A673 (cell line): ENCODE measurements at regions of chr15 and their contacts with region 1.

Region 1: GRCh38 chr15:29233566-29233965 is 36.1 kb downstream of the NSMCE3 start:
- DNase-seq: no peak
- H3K4me3 ChIP-seq: no peak overlapping the region
- H3K27ac ChIP-seq: no peak overlapping the region
- H3K4me1 ChIP-seq: no peaks in the 10 kb centered on the region
- H3K27me3 ChIP-seq: peaks cover 22% of the 10 kb centered on the region
- CTCF ChIP-seq: no peak

Region 2: GRCh38 chr15:28783466-28783865 is 450.1 kb before region 1 on chr15:
- CTCF ChIA-PET with region 1: no interaction called
- POLR2A ChIA-PET with region 1: no interaction called
- intact Hi-C with region 1: no loop called
- DNase-seq: no peak
- H3K4me3 ChIP-seq: no peak overlapping the region
- H3K27ac ChIP-seq: no peak overlapping the region
- H3K4me1 ChIP-seq: no peaks in the 10 kb centered on the region
- H3K27me3 ChIP-seq: peaks cover 5% of the 10 kb centered on the region
- CTCF ChIP-seq: no peak

Region 3: DNA sequence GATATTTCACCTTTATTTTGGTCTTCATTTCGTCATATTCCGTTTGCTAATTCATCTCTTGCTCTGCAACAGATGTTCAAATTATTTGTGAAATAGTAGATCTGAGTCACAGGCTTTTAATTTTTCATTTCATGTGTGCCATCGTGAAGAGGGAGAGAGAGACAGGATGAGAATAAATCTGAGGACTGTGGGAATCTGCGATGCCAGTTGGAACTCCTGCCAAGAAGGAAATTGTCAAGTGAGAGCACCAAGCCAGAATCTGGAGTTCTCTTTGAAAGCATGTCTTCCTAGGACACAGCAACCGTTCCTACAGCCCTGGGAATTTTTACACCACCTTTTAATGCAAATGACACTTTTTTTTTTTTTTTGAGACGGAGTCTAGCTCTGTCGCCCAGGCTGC is 12.7 kb before region 1 on chr15:
- CTCF ChIA-PET with region 1: interaction called, 11 read pairs
- POLR2A ChIA-PET with region 1: no interaction called
- intact Hi-C with region 1: no loop called
- DNase-seq: peak; percentile 4
- H3K4me3 ChIP-seq: no peak overlapping the region
- H3K27ac ChIP-seq: no peak overlapping the region
- H3K4me1 ChIP-seq: no peaks in the 10 kb centered on the region
- H3K27me3 ChIP-seq: peaks cover 2% of the 10 kb centered on the region
- CTCF ChIP-seq: no peak